Activated CD4-positive, alpha-beta T cell treated with anti-CD3 and anti-CD28 coated beads for 36 hours (primary cell): ENCODE measurements at regions of chr9 and their contacts with region 1.

Region 1: GRCh38 chr9:127785023-127785932 is 556 bp upstream of the CDK9 start:
- DNase-seq: peak; percentile 93
- ATAC-seq: peak; percentile 34
- H3K4me3 Mint-ChIP-seq: peak overlapping the region; percentile 97
- H3K27ac Mint-ChIP-seq: peak overlapping the region; percentile 97
- H3K4me1 Mint-ChIP-seq: peaks cover 74% of the 10 kb centered on the region
- H3K27me3 Mint-ChIP-seq: no peaks in the 10 kb centered on the region

Region 2: DNA sequence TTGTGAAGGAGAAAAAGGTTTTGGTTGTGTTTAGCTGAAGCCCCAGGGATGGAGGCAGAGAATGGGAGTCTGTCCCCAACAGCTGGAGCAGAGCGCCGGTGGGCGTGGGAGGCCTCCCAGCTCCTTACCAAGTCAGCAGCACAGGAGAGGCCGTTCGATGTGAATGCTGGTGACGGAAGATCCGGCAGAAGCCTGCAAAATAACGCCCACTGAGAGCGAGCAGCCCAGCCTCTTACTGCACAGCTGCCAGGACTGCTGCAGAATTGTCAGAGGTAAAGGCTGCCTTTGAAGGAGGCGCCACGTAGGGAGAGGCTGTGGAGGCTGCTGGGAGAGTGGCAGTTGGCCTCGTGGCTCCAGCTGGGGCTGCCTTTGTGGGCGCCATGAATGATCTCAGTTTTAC is 689.1 kb before region 1 on chr9:
- CTCF ChIA-PET with region 1: no interaction called
- POLR2A ChIA-PET with region 1: no interaction called
- intact Hi-C with region 1: no loop called
- DNase-seq: no peak
- ATAC-seq: no peak
- H3K4me3 Mint-ChIP-seq: no peak overlapping the region
- H3K27ac Mint-ChIP-seq: no peak overlapping the region
- H3K4me1 Mint-ChIP-seq: no peaks in the 10 kb centered on the region
- H3K27me3 Mint-ChIP-seq: no peaks in the 10 kb centered on the region

Region 3: GRCh38 chr9:127715394-127716337 is 69.6 kb before region 1 on chr9 and contains the starts of genes PTRH1 and TTC16:
- CTCF ChIA-PET with region 1: interaction called, 4 read pairs
- POLR2A ChIA-PET with region 1: no interaction called
- intact Hi-C with region 1: loop called in 1 of 2 experiments (anchors 1 kb)
- DNase-seq: peak; percentile 99
- ATAC-seq: peak; percentile 97
- H3K4me3 Mint-ChIP-seq: peak within 1 kb of the TSS; percentile 92
- H3K27ac Mint-ChIP-seq: peak within 1 kb of the TSS; percentile 97
- H3K4me1 Mint-ChIP-seq: peaks cover 25% of the 10 kb centered on the region
- H3K27me3 Mint-ChIP-seq: no peaks in the 10 kb centered on the region
- total RNA-seq, gene PTRH1: 12.9 to 15.1 TPM
- total RNA-seq, gene TTC16: 0.16 to 0.30 TPM

Region 4: GRCh38 chr9:127749090-127749787 is 36.0 kb before region 1 on chr9:
- CTCF ChIA-PET with region 1: no interaction called
- POLR2A ChIA-PET with region 1: no interaction called
- intact Hi-C with region 1: no loop called
- DNase-seq: no peak
- ATAC-seq: no peak
- H3K4me3 Mint-ChIP-seq: no peak overlapping the region
- H3K27ac Mint-ChIP-seq: no peak overlapping the region
- H3K4me1 Mint-ChIP-seq: peaks cover 6% of the 10 kb centered on the region
- H3K27me3 Mint-ChIP-seq: no peaks in the 10 kb centered on the region

Region 5: GRCh38 chr9:127770905-127771569 is 14.2 kb before region 1 on chr9:
- CTCF ChIA-PET with region 1: interaction called, 6 read pairs
- POLR2A ChIA-PET with region 1: interaction called, 15 read pairs
- intact Hi-C with region 1: loop called (anchors 1 kb)
- DNase-seq: peak; percentile 99
- ATAC-seq: peak; percentile 95
- H3K4me3 Mint-ChIP-seq: peak overlapping the region; percentile 80
- H3K27ac Mint-ChIP-seq: peak overlapping the region; percentile 80
- H3K4me1 Mint-ChIP-seq: peaks cover 59% of the 10 kb centered on the region
- H3K27me3 Mint-ChIP-seq: no peaks in the 10 kb centered on the region

Region 6: GRCh38 chr9:127862075-127863011 is 77.1 kb after region 1 on chr9:
- CTCF ChIA-PET with region 1: no interaction called
- POLR2A ChIA-PET with region 1: no interaction called
- intact Hi-C with region 1: loop called (anchors 1 to 5 kb)
- DNase-seq: peak; percentile 43
- ATAC-seq: peak; percentile 20
- H3K4me3 Mint-ChIP-seq: no peak overlapping the region
- H3K27ac Mint-ChIP-seq: peak overlapping the region; percentile 51
- H3K4me1 Mint-ChIP-seq: peaks cover 41% of the 10 kb centered on the region
- H3K27me3 Mint-ChIP-seq: no peaks in the 10 kb centered on the region

Region 7: GRCh38 chr9:128254855-128255759 is 469.8 kb after region 1 on chr9:
- CTCF ChIA-PET with region 1: no interaction called
- POLR2A ChIA-PET with region 1: no interaction called
- intact Hi-C with region 1: no loop called
- DNase-seq: peak; percentile 76
- ATAC-seq: no peak
- H3K4me3 Mint-ChIP-seq: no peak overlapping the region
- H3K27ac Mint-ChIP-seq: no peak overlapping the region
- H3K4me1 Mint-ChIP-seq: peaks cover 4% of the 10 kb centered on the region
- H3K27me3 Mint-ChIP-seq: peaks cover 5% of the 10 kb centered on the region

Region 8: DNA sequence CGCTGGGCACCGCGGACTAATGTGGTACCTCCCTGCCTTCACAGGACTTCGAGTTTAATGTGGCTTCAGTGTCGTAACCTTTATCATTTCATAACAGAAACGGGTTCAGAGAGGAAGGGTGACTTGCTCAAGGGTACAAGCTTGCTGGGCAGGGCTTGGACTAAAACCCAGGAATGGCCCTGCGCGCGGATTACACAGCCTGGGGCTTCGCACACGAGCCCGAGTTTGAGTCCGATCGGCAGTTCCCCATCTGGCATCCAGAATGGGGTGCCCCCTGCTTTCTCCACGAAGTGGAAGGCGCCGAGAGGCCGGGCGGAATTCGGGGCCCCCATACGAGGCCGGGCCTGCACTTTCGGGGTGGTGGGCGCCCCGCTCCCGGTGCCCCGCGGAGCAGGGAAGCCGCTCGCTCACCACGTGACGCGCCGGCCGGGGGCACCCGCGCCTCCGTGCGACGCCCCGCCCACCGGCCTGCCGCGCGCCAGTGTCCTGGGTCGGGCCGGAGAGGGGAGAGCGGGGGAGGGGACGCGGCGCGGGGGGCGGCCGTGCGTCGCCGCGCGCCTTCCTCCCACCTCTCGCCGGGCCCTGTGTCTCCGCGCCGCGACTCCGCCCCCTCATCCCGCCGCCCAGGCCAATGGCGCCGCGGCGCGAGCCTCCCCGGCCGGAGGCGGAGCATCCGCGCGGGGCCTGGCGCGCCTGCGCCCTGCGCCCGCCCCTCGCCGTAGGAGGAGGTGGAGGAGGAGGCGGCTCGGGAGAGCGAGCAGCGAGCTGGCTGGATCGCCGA is 903.4 kb after region 1 on chr9 and contains the start of gene SET:
- CTCF ChIA-PET with region 1: no interaction called
- POLR2A ChIA-PET with region 1: no interaction called
- intact Hi-C with region 1: loop called in 1 of 2 experiments (anchors 5 kb)
- DNase-seq: peak; percentile 96
- ATAC-seq: peak; percentile 71
- H3K4me3 Mint-ChIP-seq: peak within 1 kb of the TSS; percentile 99
- H3K27ac Mint-ChIP-seq: peak within 1 kb of the TSS; percentile 94
- H3K4me1 Mint-ChIP-seq: peaks cover 61% of the 10 kb centered on the region
- H3K27me3 Mint-ChIP-seq: no peaks in the 10 kb centered on the region
- total RNA-seq, gene SET: 673 to 682 TPM